Uterus (tissue), 4 donors: ENCODE measurements at regions of chr14 and their contacts with region 1.

Region 1: DNA sequence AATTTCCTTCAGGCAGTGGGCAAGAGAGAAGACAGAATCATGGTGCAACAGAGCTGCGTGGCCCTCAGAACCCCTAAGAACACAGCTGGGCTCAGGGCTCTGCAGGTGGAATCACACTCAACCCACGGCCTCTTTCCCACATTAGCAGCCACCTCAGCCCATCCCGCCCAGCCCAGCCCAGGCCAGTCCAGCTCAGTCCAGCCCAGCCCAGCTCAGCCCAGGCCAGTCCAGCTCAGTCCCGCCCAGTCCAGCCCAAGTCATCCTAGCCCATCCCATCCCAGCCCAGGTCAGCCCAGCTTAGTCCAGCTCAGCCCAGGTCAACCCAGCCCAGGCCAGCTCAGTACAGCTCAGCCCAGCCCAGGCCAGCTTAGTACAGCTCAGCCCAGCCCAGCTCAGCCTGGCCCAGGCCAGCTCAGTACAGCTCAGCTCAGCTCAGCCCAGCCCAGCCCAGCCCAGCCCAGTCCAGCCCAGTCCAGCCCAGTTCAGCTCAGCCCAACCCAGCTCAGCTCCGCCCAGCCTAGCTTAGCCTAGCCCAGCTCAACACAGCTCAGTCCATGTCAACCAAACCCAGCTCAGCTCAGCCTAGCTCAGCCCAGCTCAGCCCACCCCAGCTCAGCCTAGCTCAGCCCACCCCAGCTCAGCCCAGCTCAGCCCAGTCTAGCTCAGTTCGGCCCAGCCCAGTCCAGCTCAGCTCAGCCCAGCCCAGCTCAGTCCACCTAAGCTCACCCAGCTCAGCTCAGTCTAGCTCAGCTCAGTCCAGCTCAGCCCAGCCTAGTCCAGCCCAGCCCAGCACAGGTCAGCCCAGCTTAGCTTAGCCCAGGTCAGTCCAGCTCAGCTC is 183.1 kb downstream of the TMEM121 start:
- DNase-seq: no peak
- H3K4me3 ChIP-seq: no peak overlapping the region
- H3K27ac ChIP-seq: no peak overlapping the region
- H3K4me1 ChIP-seq: no peaks in the 10 kb centered on the region
- H3K27me3 ChIP-seq: no peaks in the 10 kb centered on the region
- CTCF ChIP-seq: no peak
- POLR2A ChIP-seq: no peak

Region 2: DNA sequence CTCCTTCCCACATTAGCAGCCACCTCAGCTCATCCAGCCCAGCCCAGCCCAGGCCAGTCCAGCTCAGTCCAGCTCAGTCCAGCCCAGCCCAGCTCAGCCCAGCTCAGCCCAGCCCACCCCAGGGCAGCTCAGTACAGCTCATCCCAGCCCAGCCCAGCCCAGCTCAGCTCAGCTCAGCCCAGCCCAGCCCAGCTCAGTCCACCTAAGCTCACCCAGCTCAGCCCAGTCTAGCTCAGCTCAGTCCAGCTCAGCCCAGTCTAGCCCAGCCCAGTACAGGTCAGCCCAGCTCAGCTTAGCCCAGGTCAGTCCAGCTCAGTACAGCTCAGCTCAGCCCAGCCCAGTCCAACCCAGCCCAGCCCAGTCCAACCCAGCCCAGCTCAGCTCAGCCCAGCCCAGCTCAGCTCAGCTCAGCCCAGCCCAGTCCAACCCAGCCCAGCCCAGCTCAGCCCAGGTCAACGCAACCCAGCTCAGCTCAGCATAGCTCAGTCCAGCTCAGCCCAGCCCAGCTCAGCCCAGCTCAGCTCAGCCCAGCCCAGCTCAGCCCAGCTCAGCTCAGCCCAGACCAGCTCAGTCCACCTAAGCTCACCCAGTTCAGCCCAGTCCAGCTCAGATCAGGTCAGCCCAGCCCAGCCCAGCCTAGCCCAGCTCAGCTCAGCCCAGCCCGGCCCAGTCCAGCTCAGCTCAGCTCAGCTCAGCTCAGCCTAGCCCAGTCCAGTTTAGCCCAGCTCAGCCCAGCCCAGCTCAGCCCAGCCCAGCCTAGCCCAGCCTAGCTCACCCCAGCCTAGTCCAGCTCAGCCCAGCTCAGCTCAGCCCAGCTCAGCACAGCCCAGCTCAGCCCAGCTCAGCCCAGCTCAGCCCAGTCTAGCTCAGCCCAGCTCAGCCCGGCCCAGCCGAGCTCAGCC is 120.1 kb before region 1 on chr14:
- intact Hi-C with region 1: loop called (anchors 5 kb)
- DNase-seq: no peak
- H3K4me3 ChIP-seq: no peak overlapping the region
- H3K27ac ChIP-seq: no peak overlapping the region
- H3K4me1 ChIP-seq: no peaks in the 10 kb centered on the region
- H3K27me3 ChIP-seq: no peaks in the 10 kb centered on the region
- CTCF ChIP-seq: no peak
- POLR2A ChIP-seq: no peak

Region 3: DNA sequence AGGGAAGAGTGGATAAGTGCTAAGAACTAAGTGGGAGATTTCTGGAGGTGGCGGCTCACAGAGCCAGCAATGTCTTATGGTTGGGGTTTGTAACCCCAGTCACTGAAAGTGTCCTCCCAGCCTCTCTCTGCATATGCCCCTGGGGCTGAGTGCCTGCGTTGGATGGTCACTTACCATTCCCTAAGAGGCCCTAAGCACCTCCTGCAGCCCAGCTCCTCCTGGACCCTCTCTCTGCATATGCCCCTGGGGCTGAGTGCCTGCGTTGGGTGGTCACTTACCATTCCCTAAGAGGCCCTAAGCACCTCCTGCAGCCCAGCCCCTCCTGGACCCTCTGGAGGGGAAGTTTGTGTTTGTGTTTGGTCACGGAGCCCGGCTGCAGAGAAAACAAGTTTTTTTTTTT is 242.7 kb after region 1 on chr14:
- intact Hi-C with region 1: no loop called
- DNase-seq: no peak
- H3K4me3 ChIP-seq: no peak overlapping the region
- H3K27ac ChIP-seq: no peak overlapping the region
- H3K4me1 ChIP-seq: no peaks in the 10 kb centered on the region
- H3K27me3 ChIP-seq: no peaks in the 10 kb centered on the region
- CTCF ChIP-seq: no peak
- POLR2A ChIP-seq: no peak